ENCODE measurements at regions of chrX and their contacts with region 1.

Region 1: DNA sequence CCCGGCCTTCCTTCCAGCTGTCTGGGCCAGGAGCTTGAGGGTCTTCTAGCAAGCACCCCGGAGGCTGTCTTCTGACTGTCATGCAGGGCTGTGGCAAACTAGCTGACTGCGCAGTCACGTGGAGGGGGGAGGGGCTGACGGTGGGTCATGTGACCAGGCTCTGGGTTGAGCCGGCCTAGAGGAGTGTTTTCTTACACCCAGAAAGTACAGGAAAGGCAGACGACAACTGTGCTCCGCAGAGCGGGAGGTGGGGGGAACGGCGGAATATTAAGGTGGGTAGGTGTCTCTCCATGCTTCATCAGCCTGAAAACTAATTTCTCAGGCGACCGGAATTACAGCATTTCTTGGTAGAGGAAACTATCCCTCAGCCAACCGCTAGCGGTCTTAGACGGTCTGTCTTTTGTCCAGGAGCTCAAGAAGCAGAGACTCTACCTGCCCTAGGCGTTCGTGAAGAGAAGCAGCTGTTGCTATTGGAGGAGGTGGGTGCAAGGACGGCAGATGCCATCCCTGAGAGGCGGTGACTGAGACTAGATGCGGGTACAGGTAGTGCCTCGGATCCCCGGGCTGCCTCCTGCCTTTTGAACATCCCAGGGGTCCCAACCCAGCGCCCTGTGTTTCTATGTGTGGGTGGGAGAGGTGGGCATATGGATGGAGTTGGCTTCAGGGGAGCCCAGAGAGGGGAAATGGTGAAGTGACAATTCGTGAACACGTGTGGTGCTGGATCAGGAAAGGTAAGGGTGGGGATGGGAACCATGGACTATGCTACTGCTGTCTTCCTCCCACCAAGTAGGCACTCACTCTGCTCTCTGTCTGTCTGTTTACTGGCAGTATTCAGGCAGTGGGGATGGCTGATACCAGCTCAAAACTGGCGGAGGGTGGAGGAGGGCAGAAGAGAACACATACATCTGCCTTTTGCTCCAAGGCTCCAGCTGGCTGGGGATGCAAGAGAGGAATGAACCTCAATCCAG is 8.8 kb downstream of the GPRASP1 start:
- DNase-seq: peak; percentile 57 to 82 (median 78)
- ATAC-seq: peak; percentile 97
- H3K4me3 ChIP-seq: peak overlapping the region; percentile 58
- H3K4me3 Mint-ChIP-seq: peak overlapping the region; percentile 85 to 94 (median 91)
- H3K27ac ChIP-seq: peak overlapping the region; percentile 73
- H3K27ac Mint-ChIP-seq: peak overlapping the region; percentile 84 to 96 (median 89)
- H3K4me1 ChIP-seq: no peaks in the 10 kb centered on the region
- H3K4me1 Mint-ChIP-seq: peaks cover 17 to 46% (median 39%) of the 10 kb centered on the region in 7 donors
- H3K27me3 ChIP-seq: no peaks in the 10 kb centered on the region
- H3K27me3 Mint-ChIP-seq: peaks cover 0 to 7% (median 0%) of the 10 kb centered on the region in 5 donors

Region 2: DNA sequence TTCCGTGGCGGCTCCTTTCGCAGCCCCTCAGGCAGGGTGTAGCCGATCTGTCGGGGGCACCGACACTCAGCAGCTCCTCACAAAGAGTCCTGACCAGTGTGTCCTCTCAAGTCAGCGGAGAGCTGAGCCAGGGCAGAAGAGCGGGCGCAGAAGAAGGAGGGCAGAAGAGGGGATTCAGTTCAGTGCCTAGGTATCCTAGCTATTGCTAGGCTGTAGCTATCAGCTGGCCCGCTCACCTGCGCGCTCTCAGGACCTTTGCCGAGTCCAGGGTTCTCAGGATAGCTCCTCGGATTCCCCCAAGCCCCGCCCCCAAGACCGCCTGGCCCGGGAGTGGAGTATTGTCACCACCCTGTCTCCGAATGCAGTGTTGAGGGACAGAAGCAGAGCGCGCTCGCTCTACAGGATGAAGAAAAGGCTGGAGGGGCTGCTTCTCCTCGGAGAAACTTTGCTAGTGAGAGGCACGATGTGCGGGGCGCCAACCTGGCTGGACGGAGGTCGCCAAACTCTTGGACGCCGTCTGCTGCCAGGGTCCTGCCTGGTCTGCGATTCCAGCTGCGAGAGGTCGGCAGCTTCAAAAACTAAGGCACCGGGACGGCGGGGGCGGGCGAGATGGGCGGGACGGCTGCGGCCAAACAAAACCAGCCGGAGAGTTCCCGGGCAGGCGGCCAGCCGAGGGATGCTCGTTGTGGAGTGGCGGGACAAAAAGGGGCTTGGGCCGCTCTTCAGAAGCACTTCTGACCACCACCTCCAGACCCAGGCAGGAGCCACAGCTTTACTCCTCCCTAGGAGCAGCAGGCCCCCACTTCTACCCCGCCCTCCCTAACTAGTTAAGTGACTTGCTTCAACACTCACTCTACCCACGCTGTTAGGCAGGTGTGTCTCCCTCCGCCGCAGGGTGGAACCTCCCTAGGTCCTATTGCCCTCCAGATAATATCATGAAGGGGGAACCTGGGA is 1731.1 kb before region 1 on chrX and contains the start of gene XKRX:
- CTCF ChIA-PET with region 1: no interaction called
- POLR2A ChIA-PET with region 1: no interaction called
- intact Hi-C with region 1: loop called in 1 of 2 experiments (anchors 10 kb)
- DNase-seq: peak in 8 of 9 donors; percentile 16 to 64 (median 41)
- ATAC-seq: peak; percentile 90
- H3K4me3 ChIP-seq: peak within 1 kb of the TSS; percentile 56
- H3K4me3 Mint-ChIP-seq: peak within 1 kb of the TSS; percentile 87 to 97 (median 95)
- H3K27ac ChIP-seq: peak within 1 kb of the TSS; percentile 65
- H3K27ac Mint-ChIP-seq: peak within 1 kb of the TSS in 8 of 9 donors; percentile 50 to 90 (median 86)
- H3K4me1 ChIP-seq: peaks cover 0 to 10% of the 10 kb centered on the region in 2 donors
- H3K4me1 Mint-ChIP-seq: peaks cover 8 to 57% (median 47%) of the 10 kb centered on the region in 7 donors
- H3K27me3 ChIP-seq: no peaks in the 10 kb centered on the region
- H3K27me3 Mint-ChIP-seq: no peaks in the 10 kb centered on the region
- total RNA-seq, gene XKRX: 0.10 to 3.4 (median 1.5) TPM

Region 3: GRCh38 chrX:102720237-102721168 is 60.4 kb after region 1 on chrX and contains the start of gene GPRASP3:
- CTCF ChIA-PET with region 1: no interaction called
- POLR2A ChIA-PET with region 1: no interaction called
- intact Hi-C with region 1: loop called (anchors 2 kb)
- DNase-seq: peak; percentile 30 to 76 (median 66)
- ATAC-seq: peak; percentile 97
- H3K4me3 ChIP-seq: peak within 1 kb of the TSS; percentile 66
- H3K4me3 Mint-ChIP-seq: peak within 1 kb of the TSS; percentile 88 to 96 (median 93)
- H3K27ac ChIP-seq: peak within 1 kb of the TSS; percentile 49
- H3K27ac Mint-ChIP-seq: peak within 1 kb of the TSS; percentile 82 to 94 (median 88)
- H3K4me1 ChIP-seq: no peaks in the 10 kb centered on the region
- H3K4me1 Mint-ChIP-seq: peaks cover 4 to 18% (median 15%) of the 10 kb centered on the region in 7 donors
- H3K27me3 ChIP-seq: no peaks in the 10 kb centered on the region
- H3K27me3 Mint-ChIP-seq: no peaks in the 10 kb centered on the region
- total RNA-seq, gene GPRASP3: 1.5 to 3.5 (median 1.9) TPM

Measured in naive thymus-derived CD4-positive, alpha-beta T cell (primary cell).